ENCODE measurements at regions of chr12 and their contacts with region 1.

Region 1: GRCh38 chr12:79344855-79345847 is 345.6 kb downstream of the PAWR start:
- DNase-seq: peak; percentile 59
- ATAC-seq: peak; percentile 100
- H3K4me3 ChIP-seq: no peak overlapping the region
- H3K27ac ChIP-seq: no peak overlapping the region
- H3K4me1 ChIP-seq: no peaks in the 10 kb centered on the region
- H3K27me3 ChIP-seq: no peaks in the 10 kb centered on the region
- CTCF ChIP-seq: peak; percentile 85
- EP300 ChIP-seq: no peak
- POLR2A ChIP-seq: no peak
- RAD21 ChIP-seq: peak; percentile 68; the same call in 1 of the 2 replicates

Region 2: DNA sequence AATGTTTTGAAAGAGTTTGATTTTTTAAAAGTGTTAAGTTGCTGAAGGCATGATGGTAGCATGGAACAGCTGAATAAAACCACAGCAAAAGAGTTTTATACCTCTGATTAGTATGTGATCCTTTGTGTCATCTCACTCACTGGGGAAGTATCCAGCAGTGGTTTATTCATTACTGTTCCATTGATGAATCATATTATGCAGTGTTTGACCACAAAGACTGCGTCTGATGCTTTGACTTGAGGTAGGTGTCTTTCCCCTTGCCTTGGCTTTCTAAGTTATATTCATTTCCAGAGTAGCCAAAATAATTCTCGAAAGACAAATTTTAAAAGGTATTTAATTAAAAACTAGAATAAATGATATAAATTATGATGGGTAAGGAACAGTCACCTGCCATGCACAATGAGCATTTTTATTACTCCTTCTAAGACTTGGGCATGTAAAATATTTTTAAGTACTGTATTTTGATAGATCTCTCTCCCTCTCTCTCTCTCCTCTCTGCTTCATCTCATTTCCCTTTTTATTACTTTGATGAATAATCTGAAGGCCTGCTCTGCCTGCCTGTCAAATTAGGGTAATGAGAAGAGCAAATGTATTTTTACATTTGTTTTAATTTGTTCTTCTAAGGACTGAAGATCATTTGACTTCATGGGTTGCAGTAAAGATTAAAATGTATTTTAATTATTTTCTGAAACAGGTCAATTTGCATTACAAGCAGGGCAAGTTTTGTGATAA is 1349.5 kb before region 1 on chr12:
- CTCF ChIA-PET with region 1: no interaction called
- POLR2A ChIA-PET with region 1: no interaction called
- in situ Hi-C with region 1: loop called (anchors 25 kb)
- intact Hi-C with region 1: no loop called
- DNase-seq: no peak
- ATAC-seq: no peak
- H3K4me3 ChIP-seq: no peak overlapping the region
- H3K27ac ChIP-seq: no peak overlapping the region
- H3K4me1 ChIP-seq: no peaks in the 10 kb centered on the region
- H3K27me3 ChIP-seq: no peaks in the 10 kb centered on the region
- CTCF ChIP-seq: no peak
- EP300 ChIP-seq: no peak
- POLR2A ChIP-seq: no peak
- RAD21 ChIP-seq: no peak

Region 3: GRCh38 chr12:78181544-78182162 is 1163.5 kb before region 1 on chr12:
- CTCF ChIA-PET with region 1: interaction called, 3 read pairs
- POLR2A ChIA-PET with region 1: no interaction called
- in situ Hi-C with region 1: loop called (anchors 10 kb)
- intact Hi-C with region 1: loop called (anchors 1 kb)
- DNase-seq: peak; percentile 2
- ATAC-seq: peak; percentile 60; the same call in 2 of the 3 replicates
- H3K4me3 ChIP-seq: no peak overlapping the region
- H3K27ac ChIP-seq: no peak overlapping the region
- H3K4me1 ChIP-seq: no peaks in the 10 kb centered on the region
- H3K27me3 ChIP-seq: no peaks in the 10 kb centered on the region
- CTCF ChIP-seq: peak; percentile 55
- EP300 ChIP-seq: no peak
- POLR2A ChIP-seq: no peak
- RAD21 ChIP-seq: no peak

Region 4: GRCh38 chr12:78229591-78230101 is 1115.5 kb before region 1 on chr12:
- CTCF ChIA-PET with region 1: no interaction called
- POLR2A ChIA-PET with region 1: no interaction called
- in situ Hi-C with region 1: no loop called
- intact Hi-C with region 1: loop called (anchors 2 kb)
- DNase-seq: peak; percentile 28
- ATAC-seq: peak; percentile 58
- H3K4me3 ChIP-seq: no peak overlapping the region
- H3K27ac ChIP-seq: no peak overlapping the region
- H3K4me1 ChIP-seq: no peaks in the 10 kb centered on the region
- H3K27me3 ChIP-seq: no peaks in the 10 kb centered on the region
- CTCF ChIP-seq: peak; percentile 71
- EP300 ChIP-seq: no peak
- POLR2A ChIP-seq: no peak
- RAD21 ChIP-seq: no peak

Region 5: DNA sequence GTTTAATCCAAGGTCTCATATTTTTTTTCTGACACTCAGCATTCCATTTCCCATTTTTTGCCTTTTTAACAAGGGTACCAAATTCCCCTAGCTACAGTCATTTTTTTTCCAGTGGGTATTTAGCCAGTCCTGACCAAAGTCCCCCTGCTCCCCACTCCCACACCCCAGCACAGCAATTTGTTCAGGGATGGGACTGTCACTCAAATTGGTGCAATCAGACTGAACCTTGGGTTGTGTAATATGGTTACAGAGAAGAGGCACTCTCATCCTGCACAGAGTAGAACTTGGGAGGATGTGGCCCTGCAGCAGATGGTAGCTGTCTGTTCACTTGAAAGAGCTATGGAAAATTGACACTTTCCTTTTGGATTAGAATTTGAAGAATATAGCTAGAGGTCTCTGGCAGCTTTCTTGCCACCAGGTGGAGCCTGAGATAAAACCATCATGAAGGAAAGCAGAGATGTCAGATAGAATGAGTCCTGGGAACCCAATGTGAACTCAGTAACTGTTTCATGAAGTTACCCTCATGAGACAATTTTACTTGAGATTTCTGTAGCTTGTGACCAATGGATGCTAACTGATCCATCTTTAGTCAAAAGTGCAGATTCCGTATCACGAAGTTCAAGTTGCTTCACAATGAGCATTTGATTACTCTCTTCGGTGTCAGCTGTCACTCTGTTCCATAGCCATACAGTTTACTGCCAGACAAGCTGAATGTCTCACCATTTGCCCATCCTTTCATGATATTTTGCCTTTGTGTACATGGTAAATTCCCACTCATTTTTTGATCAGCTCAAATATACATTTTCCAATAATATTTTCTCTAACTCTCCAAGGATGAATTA is 874.6 kb before region 1 on chr12:
- CTCF ChIA-PET with region 1: no interaction called
- POLR2A ChIA-PET with region 1: no interaction called
- in situ Hi-C with region 1: no loop called
- intact Hi-C with region 1: loop called (anchors 1 kb)
- DNase-seq: peak; percentile 27
- ATAC-seq: peak; percentile 76
- H3K4me3 ChIP-seq: no peak overlapping the region
- H3K27ac ChIP-seq: no peak overlapping the region
- H3K4me1 ChIP-seq: no peaks in the 10 kb centered on the region
- H3K27me3 ChIP-seq: no peaks in the 10 kb centered on the region
- CTCF ChIP-seq: peak; percentile 41; the same call in 1 of the 2 replicates
- EP300 ChIP-seq: no peak
- POLR2A ChIP-seq: no peak
- RAD21 ChIP-seq: no peak

Region 6: DNA sequence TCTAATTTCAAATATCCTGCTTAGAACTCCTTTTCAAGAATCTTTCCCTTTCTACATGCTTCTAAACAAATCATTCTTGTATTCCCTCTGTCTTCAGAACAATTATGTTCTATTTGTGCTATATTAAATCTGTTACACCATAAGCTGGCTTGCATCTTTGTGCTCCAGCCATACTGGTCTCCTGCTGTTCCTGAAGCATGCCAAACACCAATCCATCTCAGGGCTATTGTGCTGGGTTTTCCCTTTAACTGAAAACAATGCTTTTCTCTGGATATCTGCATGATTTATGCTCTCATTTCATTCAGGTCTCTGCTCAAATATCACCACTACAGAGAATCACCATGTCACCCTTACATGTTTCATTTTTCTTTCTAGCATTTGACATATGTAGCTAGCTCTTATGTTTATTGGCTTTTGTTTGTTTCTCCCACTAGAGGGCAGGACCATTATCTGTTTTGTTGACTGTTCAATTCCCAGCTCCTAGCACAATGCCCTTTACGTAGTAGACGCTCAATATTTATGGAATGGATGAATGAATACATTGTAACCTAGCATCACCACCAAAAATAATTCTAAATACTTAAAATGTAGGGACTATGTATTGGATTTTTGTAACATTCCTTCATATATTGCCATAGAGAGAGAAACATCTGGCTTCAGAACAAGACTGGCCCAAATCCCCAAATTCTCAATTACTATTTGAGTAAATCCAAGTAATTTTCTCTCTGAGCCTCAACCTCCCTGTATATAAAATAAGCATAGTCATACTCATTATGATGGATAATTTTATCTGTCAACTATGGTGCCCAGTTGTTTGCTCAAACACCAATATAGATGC is 782.6 kb before region 1 on chr12:
- CTCF ChIA-PET with region 1: no interaction called
- POLR2A ChIA-PET with region 1: no interaction called
- in situ Hi-C with region 1: no loop called
- intact Hi-C with region 1: loop called (anchors 10 kb)
- DNase-seq: peak; percentile 1
- ATAC-seq: peak; percentile 49; the same call in 1 of the 3 replicates
- H3K4me3 ChIP-seq: no peak overlapping the region
- H3K27ac ChIP-seq: no peak overlapping the region
- H3K4me1 ChIP-seq: no peaks in the 10 kb centered on the region
- H3K27me3 ChIP-seq: no peaks in the 10 kb centered on the region
- CTCF ChIP-seq: peak; percentile 19; the same call in 1 of the 2 replicates
- EP300 ChIP-seq: no peak
- POLR2A ChIP-seq: no peak
- RAD21 ChIP-seq: no peak

Region 7: DNA sequence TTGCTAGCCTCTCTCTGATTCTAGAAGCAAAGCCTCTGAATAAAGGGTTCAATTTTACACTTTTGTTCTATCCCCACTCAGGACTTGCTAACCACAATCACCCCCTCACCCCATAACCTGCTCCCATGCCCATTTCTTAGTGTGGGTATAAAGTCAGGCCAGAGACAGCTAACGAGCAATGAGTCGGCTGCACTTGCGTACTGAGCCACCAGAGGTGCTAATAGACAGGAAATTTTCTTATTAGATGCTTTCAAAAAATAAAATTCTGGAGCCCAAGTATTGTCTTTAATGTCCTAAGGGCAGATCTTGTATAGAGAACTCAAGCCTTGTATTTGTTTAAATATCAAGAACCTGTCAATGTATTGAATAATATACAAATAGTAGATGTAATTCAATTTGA is 223.7 kb before region 1 on chr12:
- CTCF ChIA-PET with region 1: interaction called, 3 read pairs
- POLR2A ChIA-PET with region 1: no interaction called
- in situ Hi-C with region 1: no loop called
- intact Hi-C with region 1: loop called (anchors 2 kb)
- DNase-seq: no peak
- ATAC-seq: peak; percentile 78
- H3K4me3 ChIP-seq: no peak overlapping the region
- H3K27ac ChIP-seq: no peak overlapping the region
- H3K4me1 ChIP-seq: no peaks in the 10 kb centered on the region
- H3K27me3 ChIP-seq: no peaks in the 10 kb centered on the region
- CTCF ChIP-seq: 0 out of 2 replicates have a peak, but pooled peaks have one; percentile 18
- EP300 ChIP-seq: no peak
- POLR2A ChIP-seq: no peak
- RAD21 ChIP-seq: no peak

Region 8: DNA sequence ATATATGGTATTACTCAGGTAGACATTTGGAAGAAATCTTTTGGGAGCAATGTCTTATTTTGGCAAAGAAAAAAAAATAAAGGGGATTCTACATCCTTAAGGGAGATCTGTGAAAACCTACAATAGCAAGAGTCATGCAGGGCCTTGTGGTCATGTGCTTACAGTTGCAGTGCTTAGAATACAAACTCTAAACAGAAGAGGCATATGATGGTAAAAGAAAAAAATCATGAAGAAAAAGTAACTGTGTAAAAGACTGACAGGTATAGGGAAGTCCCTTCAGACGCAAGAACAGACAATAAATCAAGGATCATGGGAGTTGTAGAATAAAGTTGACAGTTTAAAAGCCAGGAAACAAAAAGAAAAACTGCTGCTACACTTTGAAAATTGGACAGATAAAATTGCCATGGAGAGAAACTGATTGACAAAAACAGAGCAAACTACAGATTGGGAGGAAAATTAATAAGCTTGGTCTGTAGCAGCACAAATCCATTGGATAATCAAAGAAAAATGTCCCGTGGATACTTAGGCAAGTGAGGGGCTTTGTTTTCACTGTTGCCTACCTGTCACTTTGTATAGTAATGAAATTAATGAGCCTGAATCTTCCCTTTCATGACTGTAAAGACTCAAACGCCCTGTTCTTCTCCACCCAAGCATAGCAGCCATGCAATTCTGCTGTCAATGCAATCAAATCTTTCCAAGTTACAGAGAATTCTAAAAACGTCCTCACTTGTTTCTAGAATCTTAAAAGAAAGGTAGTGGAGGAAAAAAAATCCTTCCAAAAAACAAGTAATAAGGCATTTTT is 78.6 kb before region 1 on chr12:
- CTCF ChIA-PET with region 1: no interaction called
- POLR2A ChIA-PET with region 1: no interaction called
- in situ Hi-C with region 1: no loop called
- intact Hi-C with region 1: no loop called
- DNase-seq: no peak
- ATAC-seq: no peak
- H3K4me3 ChIP-seq: no peak overlapping the region
- H3K27ac ChIP-seq: no peak overlapping the region
- H3K4me1 ChIP-seq: no peaks in the 10 kb centered on the region
- H3K27me3 ChIP-seq: no peaks in the 10 kb centered on the region
- CTCF ChIP-seq: no peak
- EP300 ChIP-seq: no peak
- POLR2A ChIP-seq: no peak
- RAD21 ChIP-seq: no peak